Activated naive CD4-positive, alpha-beta T cell treated with anti-CD3 and anti-CD28 coated beads for 36 hours (primary cell): ENCODE measurements at regions of chr12 and their contacts with region 1.

Region 1: GRCh38 chr12:26853303-26854030 is 20.5 kb upstream of the ITPR2 start:
- DNase-seq: peak; percentile 86
- H3K4me3 Mint-ChIP-seq: no peak overlapping the region
- H3K27ac Mint-ChIP-seq: no peak overlapping the region
- H3K4me1 Mint-ChIP-seq: no peaks in the 10 kb centered on the region
- H3K27me3 Mint-ChIP-seq: peaks cover 3% of the 10 kb centered on the region

Region 2: GRCh38 chr12:25184132-25184531 is 1669.3 kb before region 1 on chr12:
- CTCF ChIA-PET with region 1: no interaction called
- intact Hi-C with region 1: no loop called
- DNase-seq: no peak
- H3K4me3 Mint-ChIP-seq: no peak overlapping the region
- H3K27ac Mint-ChIP-seq: no peak overlapping the region
- H3K4me1 Mint-ChIP-seq: peaks cover 18% of the 10 kb centered on the region
- H3K27me3 Mint-ChIP-seq: no peaks in the 10 kb centered on the region

Region 3: GRCh38 chr12:26870491-26871419 is 17.3 kb after region 1 on chr12:
- CTCF ChIA-PET with region 1: interaction called, 19 read pairs
- intact Hi-C with region 1: loop called (anchors 1 kb)
- DNase-seq: no peak
- H3K4me3 Mint-ChIP-seq: no peak overlapping the region
- H3K27ac Mint-ChIP-seq: no peak overlapping the region
- H3K4me1 Mint-ChIP-seq: peaks cover 13% of the 10 kb centered on the region
- H3K27me3 Mint-ChIP-seq: peaks cover 16% of the 10 kb centered on the region

Region 4: GRCh38 chr12:27142101-27142721 is 288.7 kb after region 1 on chr12:
- CTCF ChIA-PET with region 1: no interaction called
- intact Hi-C with region 1: loop called (anchors 1 kb)
- DNase-seq: peak; percentile 61
- H3K4me3 Mint-ChIP-seq: no peak overlapping the region
- H3K27ac Mint-ChIP-seq: no peak overlapping the region
- H3K4me1 Mint-ChIP-seq: peaks cover 10% of the 10 kb centered on the region
- H3K27me3 Mint-ChIP-seq: no peaks in the 10 kb centered on the region

Region 5: GRCh38 chr12:27383429-27384260 is 530.2 kb after region 1 on chr12:
- CTCF ChIA-PET with region 1: interaction called, 3 read pairs
- intact Hi-C with region 1: loop called (anchors 5 kb)
- DNase-seq: peak; percentile 84
- H3K4me3 Mint-ChIP-seq: no peak overlapping the region
- H3K27ac Mint-ChIP-seq: no peak overlapping the region
- H3K4me1 Mint-ChIP-seq: no peaks in the 10 kb centered on the region
- H3K27me3 Mint-ChIP-seq: peaks cover 4% of the 10 kb centered on the region